Activated CD4-positive, alpha-beta memory T cell treated with anti-CD3 and anti-CD28 coated beads, Interleukin-2, amount 10 ng/mL, durations not matched to agents 7 days and 5 days (primary cell): ENCODE measurements at regions of chr10 and their contacts with region 1.

Region 1: GRCh38 chr10:4813023-4813422 is 13.0 kb upstream of the AKR1E2 start:
- DNase-seq: no peak
- H3K4me3 Mint-ChIP-seq: no peak overlapping the region
- H3K27ac Mint-ChIP-seq: no peak overlapping the region
- H3K4me1 Mint-ChIP-seq: peaks cover 5% of the 10 kb centered on the region
- H3K27me3 Mint-ChIP-seq: peaks cover 14% of the 10 kb centered on the region

Region 2: DNA sequence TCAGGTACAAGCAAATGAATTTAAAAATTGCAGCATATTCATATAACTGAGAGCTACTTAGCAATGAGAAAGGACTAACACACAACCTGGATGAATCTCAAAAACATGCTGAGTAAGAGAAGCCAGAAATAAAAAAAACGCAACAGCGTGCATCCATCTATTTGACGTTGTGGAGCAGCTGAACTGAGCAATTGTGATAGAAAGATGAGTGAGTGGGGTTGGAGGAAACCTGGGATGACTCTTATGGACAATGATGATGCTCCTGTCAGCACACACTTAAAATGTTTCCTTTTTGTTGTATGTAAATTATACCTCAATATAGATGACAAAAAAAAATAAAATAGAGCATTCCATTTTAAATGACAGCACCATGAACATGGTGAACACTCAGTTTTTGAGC is 23.0 kb before region 1 on chr10:
- CTCF ChIA-PET with region 1: no interaction called
- POLR2A ChIA-PET with region 1: no interaction called
- DNase-seq: no peak
- H3K4me3 Mint-ChIP-seq: no peak overlapping the region
- H3K27ac Mint-ChIP-seq: no peak overlapping the region
- H3K4me1 Mint-ChIP-seq: no peaks in the 10 kb centered on the region
- H3K27me3 Mint-ChIP-seq: peaks cover 21% of the 10 kb centered on the region

Region 3: GRCh38 chr10:4825851-4826665 is 13.0 kb after region 1 on chr10 and contains the start of gene AKR1E2:
- CTCF ChIA-PET with region 1: interaction called, 37 read pairs
- POLR2A ChIA-PET with region 1: interaction called, 5 read pairs
- DNase-seq: peak; percentile 84
- H3K4me3 Mint-ChIP-seq: peak within 1 kb of the TSS; percentile 70
- H3K27ac Mint-ChIP-seq: peak within 1 kb of the TSS; percentile 43
- H3K4me1 Mint-ChIP-seq: peaks cover 15% of the 10 kb centered on the region
- H3K27me3 Mint-ChIP-seq: peaks cover 44% of the 10 kb centered on the region
- total RNA-seq, gene AKR1E2: 4.0 to 4.8 TPM

Region 4: DNA sequence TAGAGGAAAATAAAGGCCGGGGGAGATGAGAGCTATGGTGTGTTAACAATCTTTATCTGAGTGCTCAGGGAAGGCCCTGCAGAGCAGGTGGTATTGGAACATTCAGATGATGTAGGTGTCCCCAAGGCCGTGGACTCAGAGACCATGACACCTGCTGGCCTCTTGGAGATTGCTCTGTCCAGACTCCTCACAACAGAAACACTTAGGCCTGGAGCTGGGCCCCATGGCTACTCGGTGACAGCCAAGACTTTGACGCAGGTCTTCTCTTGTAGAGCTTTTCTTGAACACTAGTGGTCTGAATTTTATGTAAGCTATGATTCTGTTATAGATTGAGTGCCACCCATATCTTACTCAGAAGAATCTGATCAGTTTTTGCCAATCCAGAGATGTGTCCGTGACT is 26.4 kb after region 1 on chr10:
- CTCF ChIA-PET with region 1: interaction called, 18 read pairs
- POLR2A ChIA-PET with region 1: no interaction called
- DNase-seq: no peak
- H3K4me3 Mint-ChIP-seq: no peak overlapping the region
- H3K27ac Mint-ChIP-seq: no peak overlapping the region
- H3K4me1 Mint-ChIP-seq: peaks cover 25% of the 10 kb centered on the region
- H3K27me3 Mint-ChIP-seq: no peaks in the 10 kb centered on the region

Region 5: GRCh38 chr10:5043716-5044115 is 230.7 kb after region 1 on chr10:
- CTCF ChIA-PET with region 1: no interaction called
- POLR2A ChIA-PET with region 1: no interaction called
- DNase-seq: no peak
- H3K4me3 Mint-ChIP-seq: no peak overlapping the region
- H3K27ac Mint-ChIP-seq: no peak overlapping the region
- H3K4me1 Mint-ChIP-seq: peaks cover 6% of the 10 kb centered on the region
- H3K27me3 Mint-ChIP-seq: no peaks in the 10 kb centered on the region

Region 6: GRCh38 chr10:5283305-5284158 is 470.5 kb after region 1 on chr10:
- CTCF ChIA-PET with region 1: interaction called, 16 read pairs
- POLR2A ChIA-PET with region 1: no interaction called
- DNase-seq: peak; percentile 73
- H3K4me3 Mint-ChIP-seq: no peak overlapping the region
- H3K27ac Mint-ChIP-seq: peak overlapping the region; percentile 87
- H3K4me1 Mint-ChIP-seq: peaks cover 42% of the 10 kb centered on the region
- H3K27me3 Mint-ChIP-seq: no peaks in the 10 kb centered on the region